Lower leg skin (tissue), 4 donors: ENCODE measurements at regions of chr1 and their contacts with region 1.

Region 1: GRCh38 chr1:192724670-192725069 is 84.2 kb upstream of the RGS2 start:
- DNase-seq: no peak
- H3K4me3 ChIP-seq: no peak overlapping the region
- CTCF ChIP-seq: no peak
- POLR2A ChIP-seq: no peak

Region 2: DNA sequence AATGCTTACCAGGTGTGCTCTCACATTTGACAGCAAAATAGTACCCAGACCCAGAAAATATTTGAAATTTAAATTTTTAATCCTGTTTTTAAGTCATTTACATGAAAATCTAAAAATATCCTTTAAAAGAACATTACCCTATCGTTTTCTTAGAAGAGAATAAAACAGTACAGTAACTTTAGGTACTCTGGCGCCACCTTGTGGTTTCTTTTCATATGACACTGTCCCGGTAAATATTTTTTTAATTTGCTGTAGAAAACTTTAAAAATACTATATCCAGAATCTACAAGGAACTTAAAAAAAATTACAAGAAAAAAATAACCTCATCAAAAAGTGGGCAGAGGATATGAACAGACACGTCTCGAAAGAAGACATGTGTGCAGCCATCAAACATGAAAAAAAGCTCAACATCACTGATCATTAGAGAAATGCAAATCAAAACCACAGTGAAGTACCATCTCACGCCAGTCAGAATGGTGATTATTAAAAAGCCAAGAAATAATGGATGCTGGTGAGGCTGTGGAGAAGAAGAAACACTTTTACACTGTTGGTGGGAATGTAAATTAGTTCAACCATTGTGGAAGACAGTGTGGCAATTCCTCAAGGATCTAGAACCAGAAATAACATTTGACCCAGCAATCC is 278.7 kb before region 1 on chr1:
- intact Hi-C with region 1: no loop called
- DNase-seq: peak in 1 of 2 donors; percentile 45
- H3K4me3 ChIP-seq: no peak overlapping the region
- CTCF ChIP-seq: peak in 1 of 3 donors; percentile 51
- POLR2A ChIP-seq: no peak

Region 3: DNA sequence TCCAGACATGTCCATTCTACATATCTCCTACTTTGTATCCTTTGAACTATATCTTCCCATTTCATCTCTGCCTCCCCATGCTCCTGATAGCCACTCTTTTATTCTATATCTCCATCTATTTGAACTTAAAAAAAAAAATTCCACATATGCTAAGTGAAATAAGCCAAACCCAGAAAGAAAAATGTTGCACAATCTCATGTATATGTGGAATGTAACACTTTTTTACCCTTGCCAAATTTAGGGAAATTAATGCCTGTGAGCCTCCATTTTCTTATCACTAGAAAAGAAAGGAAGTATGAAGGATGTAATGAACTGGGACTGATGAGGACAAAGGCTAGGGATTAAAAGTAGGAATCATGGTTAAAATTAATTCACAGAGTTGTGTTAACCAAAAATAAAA is 35.2 kb before region 1 on chr1:
- intact Hi-C with region 1: loop called (anchors 1 kb)
- DNase-seq: no peak
- H3K4me3 ChIP-seq: no peak overlapping the region
- CTCF ChIP-seq: no peak
- POLR2A ChIP-seq: no peak